ENCODE measurements at regions of chr22 and their contacts with region 1.

Region 1: GRCh38 chr22:30763815-30764686 is 69.4 kb downstream of the OSBP2 start:
- DNase-seq: peak; percentile 83
- H3K4me3 ChIP-seq: no peak overlapping the region
- H3K27ac ChIP-seq: peak overlapping the region; percentile 6
- H3K4me1 ChIP-seq: peaks cover 3% of the 10 kb centered on the region
- H3K27me3 ChIP-seq: no peaks in the 10 kb centered on the region
- CTCF ChIP-seq: peak; percentile 59 to 77

Region 2: GRCh38 chr22:30649430-30650007 is 114.5 kb before region 1 on chr22:
- CTCF ChIA-PET with region 1: no interaction called
- dilution Hi-C with region 1: no loop called
- in situ Hi-C with region 1: no loop called
- intact Hi-C with region 1: no loop called
- DNase-seq: peak; percentile 84
- H3K4me3 ChIP-seq: no peak overlapping the region
- H3K27ac ChIP-seq: no peak overlapping the region
- H3K4me1 ChIP-seq: peaks cover 4% of the 10 kb centered on the region
- H3K27me3 ChIP-seq: no peaks in the 10 kb centered on the region
- CTCF ChIP-seq: peak; percentile 13 to 26

Region 3: GRCh38 chr22:30802202-30803166 is 38.4 kb after region 1 on chr22:
- CTCF ChIA-PET with region 1: interaction called, 9 read pairs
- dilution Hi-C with region 1: loop called (anchors 5 kb)
- in situ Hi-C with region 1: no loop called
- intact Hi-C with region 1: loop called (anchors 2 kb)
- DNase-seq: peak; percentile 95
- H3K4me3 ChIP-seq: peak overlapping the region; percentile 51 to 57 (median 55)
- H3K27ac ChIP-seq: no peak overlapping the region
- H3K4me1 ChIP-seq: peaks cover 33% of the 10 kb centered on the region
- H3K27me3 ChIP-seq: no peaks in the 10 kb centered on the region
- CTCF ChIP-seq: peak in 1 of 2 donors; percentile 38

Region 4: GRCh38 chr22:30890686-30891442 is 126.8 kb after region 1 on chr22:
- CTCF ChIA-PET with region 1: no interaction called
- dilution Hi-C with region 1: no loop called
- in situ Hi-C with region 1: no loop called
- intact Hi-C with region 1: loop called (anchors 1 kb)
- DNase-seq: peak; percentile 22
- H3K4me3 ChIP-seq: no peak overlapping the region
- H3K27ac ChIP-seq: no peak overlapping the region
- H3K4me1 ChIP-seq: no peaks in the 10 kb centered on the region
- H3K27me3 ChIP-seq: no peaks in the 10 kb centered on the region
- CTCF ChIP-seq: peak; percentile 91 to 93

Region 5: DNA sequence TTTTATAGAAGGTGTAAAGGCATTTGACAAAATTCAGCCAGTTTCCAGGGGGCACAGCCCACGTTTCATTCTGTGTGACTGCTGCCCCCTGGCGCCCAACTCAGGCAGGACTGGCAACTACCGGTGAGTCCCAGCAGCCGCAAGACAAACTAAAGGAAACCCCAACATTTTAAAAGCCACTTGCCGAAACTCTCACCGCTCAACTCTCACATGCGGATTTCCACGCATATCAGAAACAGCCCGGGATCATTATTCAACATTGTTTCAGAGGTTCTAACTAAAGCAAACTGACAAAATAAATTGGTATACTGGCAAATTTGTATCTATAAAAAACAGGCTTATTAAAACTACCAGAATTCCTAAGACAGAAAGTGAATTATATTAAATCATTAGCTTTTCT is 156.4 kb after region 1 on chr22:
- CTCF ChIA-PET with region 1: no interaction called
- dilution Hi-C with region 1: no loop called
- in situ Hi-C with region 1: loop called (anchors 5 kb)
- intact Hi-C with region 1: loop called (anchors 1 kb)
- DNase-seq: peak; percentile 52
- H3K4me3 ChIP-seq: no peak overlapping the region
- H3K27ac ChIP-seq: no peak overlapping the region
- H3K4me1 ChIP-seq: peaks cover 9% of the 10 kb centered on the region
- H3K27me3 ChIP-seq: no peaks in the 10 kb centered on the region
- CTCF ChIP-seq: peak; percentile 75 to 89

Region 6: DNA sequence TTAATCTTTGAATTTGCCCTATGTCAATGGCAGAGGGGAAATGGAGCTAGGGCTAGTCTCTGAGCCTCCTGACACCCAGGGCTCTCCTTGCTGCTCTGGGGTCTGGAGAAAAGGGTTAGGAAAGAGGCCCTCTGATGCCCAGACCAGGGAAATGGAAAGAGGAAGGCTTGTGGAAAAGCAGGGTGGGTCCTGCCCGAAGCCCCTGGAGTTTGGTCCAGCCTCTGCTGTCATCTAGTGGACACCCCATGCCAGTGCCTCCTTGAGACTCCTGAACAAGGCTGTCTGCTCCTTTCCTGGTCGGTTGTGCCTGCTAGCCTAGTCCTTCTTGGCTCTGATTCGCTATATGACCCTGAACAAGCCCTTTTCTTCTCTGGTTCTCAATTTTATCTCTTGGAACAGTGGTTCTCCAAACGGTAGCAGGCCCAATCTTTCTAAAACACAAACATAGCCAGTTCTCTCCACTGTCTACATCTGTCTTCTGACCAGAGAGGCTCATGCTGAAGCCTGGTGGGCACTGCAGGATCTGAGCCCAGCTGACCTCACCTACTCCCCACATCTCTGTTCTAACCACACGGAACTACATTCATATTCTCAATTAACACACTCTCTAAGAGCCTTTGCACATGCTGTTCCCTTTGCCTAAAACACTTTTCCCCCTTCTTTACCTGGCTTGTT is 385.0 kb after region 1 on chr22:
- CTCF ChIA-PET with region 1: no interaction called
- dilution Hi-C with region 1: no loop called
- in situ Hi-C with region 1: no loop called
- intact Hi-C with region 1: loop called (anchors 1 kb)
- DNase-seq: peak; percentile 48
- H3K4me3 ChIP-seq: no peak overlapping the region
- H3K27ac ChIP-seq: no peak overlapping the region
- H3K4me1 ChIP-seq: no peaks in the 10 kb centered on the region
- H3K27me3 ChIP-seq: no peaks in the 10 kb centered on the region
- CTCF ChIP-seq: peak; percentile 98 to 99